Ovary (tissue), 10 donors: ENCODE measurements at regions of chr22 and their contacts with region 1.

Region 1: GRCh38 chr22:17283423-17283822 is 64.2 kb upstream of the ADA2 start:
- DNase-seq: no peak
- H3K4me3 ChIP-seq: no peak overlapping the region
- H3K27ac ChIP-seq: no peak overlapping the region
- H3K4me1 ChIP-seq: no peaks in the 10 kb centered on the region
- H3K27me3 ChIP-seq: no peaks in the 10 kb centered on the region
- CTCF ChIP-seq: no peak
- EP300 ChIP-seq: no peak
- POLR2A ChIP-seq: no peak

Region 2: GRCh38 chr22:17303840-17304779 is 20.7 kb after region 1 on chr22:
- intact Hi-C with region 1: loop called in 1 of 4 experiments (anchors 1 kb)
- DNase-seq: no peak
- H3K4me3 ChIP-seq: no peak overlapping the region
- H3K27ac ChIP-seq: no peak overlapping the region
- H3K4me1 ChIP-seq: no peaks in the 10 kb centered on the region
- H3K27me3 ChIP-seq: no peaks in the 10 kb centered on the region
- CTCF ChIP-seq: no peak
- EP300 ChIP-seq: no peak
- POLR2A ChIP-seq: no peak